ENCODE measurements at regions of chr15 and their contacts with region 1.

Region 1: GRCh38 chr15:84863565-84864443 is 20.7 kb upstream of the SLC28A1 start:
- DNase-seq: no peak
- ATAC-seq: peak; percentile 40

Region 2: GRCh38 chr15:84929744-84930371 is 66.1 kb after region 1 on chr15:
- intact Hi-C with region 1: loop called (anchors 5 kb)
- DNase-seq: no peak
- ATAC-seq: no peak

Region 3: GRCh38 chr15:85100186-85100937 is 236.6 kb after region 1 on chr15:
- intact Hi-C with region 1: no loop called
- DNase-seq: no peak
- ATAC-seq: no peak

Measured in Right ventricle myocardium superior (tissue), 1 donor.